CD4-positive, alpha-beta memory T cell (primary cell): ENCODE measurements at regions of chr7 and their contacts with region 1.

Region 1: DNA sequence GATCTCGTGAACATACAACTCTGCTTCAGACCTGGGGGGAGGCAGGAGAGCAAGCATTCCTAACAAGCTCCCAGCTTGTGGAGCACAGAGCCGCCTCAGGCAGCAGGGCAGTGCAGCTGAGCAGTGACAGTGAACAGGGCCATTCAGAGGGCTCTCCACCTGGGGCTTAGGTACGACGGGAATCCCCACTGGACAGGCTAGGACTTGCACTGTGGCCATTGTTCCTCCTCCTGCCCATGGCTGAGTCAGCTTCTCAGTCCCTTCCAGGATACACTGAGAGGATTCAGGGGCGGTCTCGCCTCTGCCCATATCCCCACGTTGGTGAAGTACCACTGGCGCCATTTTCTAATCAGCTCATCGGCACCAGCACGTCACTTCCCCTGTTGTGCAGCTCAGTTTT is 71.1 kb downstream of the FIGNL1 start:
- DNase-seq: no peak
- H3K4me3 ChIP-seq: no peak overlapping the region
- H3K4me3 Mint-ChIP-seq: peak overlapping the region in 4 of 8 donors; percentile 17 to 46 (median 24)
- H3K27ac ChIP-seq: peak overlapping the region; percentile 18
- H3K27ac Mint-ChIP-seq: peak overlapping the region in 6 of 7 donors; percentile 77 to 89 (median 87)
- H3K4me1 ChIP-seq: peaks cover 94% of the 10 kb centered on the region
- H3K4me1 Mint-ChIP-seq: peaks cover 66 to 99% (median 86%) of the 10 kb centered on the region in 4 donors
- H3K27me3 ChIP-seq: no peaks in the 10 kb centered on the region
- H3K27me3 Mint-ChIP-seq: no peaks in the 10 kb centered on the region

Region 2: GRCh38 chr7:50397320-50397970 is 18.4 kb after region 1 on chr7:
- CTCF ChIA-PET with region 1: interaction called, 3 read pairs
- POLR2A ChIA-PET with region 1: interaction called, 22 read pairs
- intact Hi-C with region 1: loop called (anchors 2 kb)
- DNase-seq: peak; percentile 42 to 77 (median 54)
- H3K4me3 ChIP-seq: no peak overlapping the region
- H3K4me3 Mint-ChIP-seq: peak overlapping the region in 6 of 8 donors; percentile 21 to 72 (median 49)
- H3K27ac ChIP-seq: peak overlapping the region; percentile 56
- H3K27ac Mint-ChIP-seq: peak overlapping the region; percentile 80 to 99 (median 91)
- H3K4me1 ChIP-seq: peaks cover 75% of the 10 kb centered on the region
- H3K4me1 Mint-ChIP-seq: peaks cover 59 to 79% (median 67%) of the 10 kb centered on the region in 4 donors
- H3K27me3 ChIP-seq: no peaks in the 10 kb centered on the region
- H3K27me3 Mint-ChIP-seq: no peaks in the 10 kb centered on the region

Region 3: GRCh38 chr7:50436133-50436806 is 57.2 kb after region 1 on chr7:
- CTCF ChIA-PET with region 1: no interaction called
- POLR2A ChIA-PET with region 1: no interaction called
- intact Hi-C with region 1: no loop called
- DNase-seq: no peak
- H3K4me3 ChIP-seq: no peak overlapping the region
- H3K4me3 Mint-ChIP-seq: no peak overlapping the region
- H3K27ac ChIP-seq: no peak overlapping the region
- H3K27ac Mint-ChIP-seq: no peak overlapping the region
- H3K4me1 ChIP-seq: no peaks in the 10 kb centered on the region
- H3K4me1 Mint-ChIP-seq: no peaks in the 10 kb centered on the region
- H3K27me3 ChIP-seq: no peaks in the 10 kb centered on the region
- H3K27me3 Mint-ChIP-seq: no peaks in the 10 kb centered on the region